ENCODE measurements at regions of chr14 and their contacts with region 1.

Region 1: GRCh38 chr14:69685716-69686115 is 74.3 kb downstream of the SUSD6 start:
- DNase-seq: peak; percentile 82
- H3K4me3 Mint-ChIP-seq: peak overlapping the region; percentile 48
- H3K27ac Mint-ChIP-seq: peak overlapping the region; percentile 84
- H3K4me1 Mint-ChIP-seq: peaks cover 47% of the 10 kb centered on the region
- H3K27me3 Mint-ChIP-seq: no peaks in the 10 kb centered on the region
- CTCF ChIP-seq: no peak

Region 2: GRCh38 chr14:69657950-69658355 is 27.8 kb before region 1 on chr14:
- CTCF ChIA-PET with region 1: interaction called, 3 read pairs
- POLR2A ChIA-PET with region 1: interaction called, 51 read pairs
- intact Hi-C with region 1: no loop called
- DNase-seq: peak; percentile 71
- H3K4me3 Mint-ChIP-seq: peak overlapping the region; percentile 69
- H3K27ac Mint-ChIP-seq: peak overlapping the region; percentile 98
- H3K4me1 Mint-ChIP-seq: peaks cover 51% of the 10 kb centered on the region
- H3K27me3 Mint-ChIP-seq: no peaks in the 10 kb centered on the region
- CTCF ChIP-seq: no peak

Region 3: GRCh38 chr14:69666690-69667239 is 19.0 kb before region 1 on chr14:
- CTCF ChIA-PET with region 1: interaction called, 3 read pairs
- POLR2A ChIA-PET with region 1: interaction called, 42 read pairs
- intact Hi-C with region 1: no loop called
- DNase-seq: no peak
- H3K4me3 Mint-ChIP-seq: no peak overlapping the region
- H3K27ac Mint-ChIP-seq: peak overlapping the region; percentile 61
- H3K4me1 Mint-ChIP-seq: peaks cover 40% of the 10 kb centered on the region
- H3K27me3 Mint-ChIP-seq: no peaks in the 10 kb centered on the region
- CTCF ChIP-seq: no peak

Region 4: GRCh38 chr14:69708586-69709174 is 23.0 kb after region 1 on chr14:
- CTCF ChIA-PET with region 1: interaction called, 5 read pairs
- POLR2A ChIA-PET with region 1: interaction called, 71 read pairs
- intact Hi-C with region 1: no loop called
- DNase-seq: peak; percentile 19
- H3K4me3 Mint-ChIP-seq: no peak overlapping the region
- H3K27ac Mint-ChIP-seq: no peak overlapping the region
- H3K4me1 Mint-ChIP-seq: peaks cover 19% of the 10 kb centered on the region
- H3K27me3 Mint-ChIP-seq: no peaks in the 10 kb centered on the region
- CTCF ChIP-seq: no peak

Region 5: GRCh38 chr14:69715725-69716477 is 30.2 kb after region 1 on chr14:
- CTCF ChIA-PET with region 1: interaction called, 6 read pairs
- POLR2A ChIA-PET with region 1: interaction called, 71 read pairs
- intact Hi-C with region 1: no loop called
- DNase-seq: peak; percentile 98
- H3K4me3 Mint-ChIP-seq: peak overlapping the region; percentile 21
- H3K27ac Mint-ChIP-seq: peak overlapping the region; percentile 61
- H3K4me1 Mint-ChIP-seq: peaks cover 48% of the 10 kb centered on the region
- H3K27me3 Mint-ChIP-seq: no peaks in the 10 kb centered on the region
- CTCF ChIP-seq: no peak

Measured in MCF 10A (cell line).